Panc1 (cell line): ENCODE measurements at regions of chr20 and their contacts with region 1.

Region 1: DNA sequence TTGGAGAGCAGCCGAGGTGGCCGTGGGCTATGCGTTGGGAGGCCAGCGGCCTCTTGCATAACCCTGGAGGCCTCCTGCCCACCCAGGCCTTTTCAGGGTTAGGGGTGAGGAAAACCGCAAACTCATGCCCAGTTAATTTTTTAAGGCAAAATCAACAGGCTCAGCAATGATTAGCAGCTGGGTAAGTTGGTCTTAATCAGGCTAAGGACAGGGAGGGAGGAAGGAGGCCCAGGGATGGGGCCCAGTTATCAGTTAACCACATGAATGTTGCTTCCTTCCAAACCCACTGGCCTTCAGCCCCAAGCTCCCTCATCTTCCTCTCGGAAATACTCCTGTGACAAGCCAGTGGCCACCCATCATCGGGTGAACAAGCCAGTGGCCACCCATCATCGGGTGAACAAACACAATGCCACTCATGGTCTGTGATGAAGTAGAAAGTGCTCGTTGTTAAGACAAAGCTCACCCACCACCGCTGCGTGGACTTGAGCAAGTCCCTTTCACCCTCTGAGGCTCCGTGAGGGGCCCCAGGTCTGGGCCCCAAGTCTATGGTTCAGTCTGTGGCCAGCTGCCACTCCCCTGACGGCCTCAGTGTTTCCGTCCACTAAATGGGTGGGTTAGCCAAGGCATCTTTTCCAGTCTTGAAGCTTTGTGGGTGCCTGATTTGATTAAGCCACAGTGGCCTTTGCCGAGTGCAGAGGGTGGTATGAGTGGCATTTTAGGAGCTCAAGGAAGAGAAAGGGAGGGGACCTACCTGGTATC is 39.4 kb downstream of the HNF4A start:
- DNase-seq: no peak
- ATAC-seq: no peak
- H3K4me3 ChIP-seq: no peak overlapping the region
- H3K27ac ChIP-seq: no peak overlapping the region
- H3K4me1 ChIP-seq: no peaks in the 10 kb centered on the region
- H3K27me3 ChIP-seq: peaks cover 3% of the 10 kb centered on the region
- CTCF ChIP-seq: no peak

Region 2: GRCh38 chr20:44501448-44501847 is 106.6 kb after region 1 on chr20:
- CTCF ChIA-PET with region 1: no interaction called
- POLR2A ChIA-PET with region 1: no interaction called
- in situ Hi-C with region 1: no loop called
- intact Hi-C with region 1: no loop called
- DNase-seq: no peak
- ATAC-seq: no peak
- H3K4me3 ChIP-seq: no peak overlapping the region
- H3K27ac ChIP-seq: no peak overlapping the region
- H3K4me1 ChIP-seq: no peaks in the 10 kb centered on the region
- H3K27me3 ChIP-seq: no peaks in the 10 kb centered on the region
- CTCF ChIP-seq: no peak

Region 3: DNA sequence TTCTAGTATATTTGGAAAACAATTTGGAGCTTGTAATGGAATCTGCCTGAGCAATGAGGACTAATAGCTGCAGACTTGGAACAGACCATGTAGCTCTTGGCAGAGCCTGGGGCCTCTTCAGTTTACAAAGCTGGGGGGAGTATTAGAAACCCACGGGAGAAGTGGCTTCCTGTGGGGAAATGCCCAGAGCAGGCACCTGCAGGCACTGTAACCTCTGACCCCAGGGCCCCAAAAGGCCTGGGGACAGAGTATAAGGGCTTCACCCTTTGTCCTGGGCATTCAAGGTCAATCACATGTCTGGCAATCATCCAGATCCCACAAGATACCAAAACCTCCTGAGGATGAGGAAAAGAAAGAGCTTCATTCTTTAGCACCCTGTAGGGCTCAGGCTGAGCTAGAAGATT is 206.9 kb after region 1 on chr20:
- CTCF ChIA-PET with region 1: no interaction called
- POLR2A ChIA-PET with region 1: no interaction called
- in situ Hi-C with region 1: no loop called
- intact Hi-C with region 1: loop called (anchors 5 kb)
- DNase-seq: no peak
- ATAC-seq: peak; percentile 42; the same call in 1 of the 2 replicates
- H3K4me3 ChIP-seq: no peak overlapping the region
- H3K27ac ChIP-seq: peak overlapping the region; percentile 29
- H3K4me1 ChIP-seq: peaks cover 12% of the 10 kb centered on the region
- H3K27me3 ChIP-seq: no peaks in the 10 kb centered on the region
- CTCF ChIP-seq: no peak